Posterior cingulate gyrus (tissue), 11 donors: ENCODE measurements at regions of chr6 and their contacts with region 1.

Region 1: DNA sequence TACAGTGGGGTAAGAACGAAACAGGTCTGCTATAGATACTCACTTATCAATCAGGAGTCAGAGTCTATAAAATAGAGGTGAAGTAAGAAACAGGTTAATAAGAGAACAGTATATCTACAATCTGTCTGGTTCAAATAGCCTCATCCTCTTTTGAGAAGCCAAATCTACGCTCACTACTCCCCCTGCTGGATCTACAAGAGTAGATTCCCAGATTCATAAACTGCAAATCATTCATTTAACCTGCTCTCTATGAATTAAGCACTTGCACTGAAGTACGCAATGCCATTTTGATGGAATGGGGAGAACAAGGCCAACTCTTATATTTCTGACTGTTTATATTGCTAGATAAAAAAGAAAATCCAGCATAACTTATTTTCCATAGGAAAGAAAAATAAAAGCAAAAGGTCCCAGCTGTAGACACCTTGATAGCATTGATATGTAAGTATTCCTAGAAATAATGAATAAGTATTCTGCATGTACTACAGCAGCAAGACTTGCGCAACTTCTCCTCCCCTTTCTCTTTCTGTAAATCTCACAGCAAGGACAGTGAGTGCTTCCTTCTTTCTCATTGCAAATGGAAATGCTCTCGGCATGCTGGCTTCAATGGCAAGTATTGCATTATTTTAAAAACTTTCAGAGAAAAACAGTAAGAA is 92.3 kb downstream of the RFX6 start:
- DNase-seq: no peak

Region 2: GRCh38 chr6:116779573-116780164 is 189.7 kb before region 1 on chr6:
- intact Hi-C with region 1: loop called (anchors 2 kb)
- DNase-seq: no peak

Region 3: DNA sequence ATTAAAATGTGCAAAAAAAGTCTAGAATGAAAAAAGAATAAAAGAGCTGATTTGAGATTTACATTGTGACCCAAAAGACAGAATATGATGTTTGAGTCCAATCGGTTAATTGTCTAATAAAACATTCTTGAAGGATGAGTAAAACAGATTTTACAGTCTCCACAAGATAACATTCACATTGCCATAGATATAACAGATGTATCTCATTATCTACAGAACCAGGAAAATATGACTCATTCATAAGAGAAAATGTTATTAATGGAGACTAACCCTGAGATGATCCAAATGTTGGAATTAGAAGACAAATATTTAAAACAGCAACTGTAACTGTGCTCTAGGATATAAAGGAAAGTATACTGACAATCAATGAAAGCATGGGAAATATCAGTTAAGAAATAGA is 49.4 kb after region 1 on chr6:
- intact Hi-C with region 1: no loop called
- DNase-seq: no peak

Region 4: GRCh38 chr6:117317261-117317660 is 347.9 kb after region 1 on chr6:
- intact Hi-C with region 1: loop called (anchors 2 kb)
- DNase-seq: no peak